Transverse colon (tissue), 4 donors: ENCODE measurements at regions of chr2 and their contacts with region 1.

Region 1: GRCh38 chr2:79097843-79098242 is 10.1 kb upstream of the REG1B start:
- DNase-seq: no peak
- H3K4me3 ChIP-seq: no peak overlapping the region
- H3K27ac ChIP-seq: no peak overlapping the region
- H3K4me1 ChIP-seq: no peaks in the 10 kb centered on the region
- H3K27me3 ChIP-seq: peaks cover 36% of the 10 kb centered on the region
- CTCF ChIP-seq: no peak
- EP300 ChIP-seq: no peak
- POLR2A ChIP-seq: no peak

Region 2: GRCh38 chr2:77161009-77161408 is 1936.8 kb before region 1 on chr2:
- in situ Hi-C with region 1: no loop called
- intact Hi-C with region 1: no loop called
- DNase-seq: no peak
- H3K4me3 ChIP-seq: no peak overlapping the region
- H3K27ac ChIP-seq: no peak overlapping the region
- H3K4me1 ChIP-seq: no peaks in the 10 kb centered on the region
- H3K27me3 ChIP-seq: no peaks in the 10 kb centered on the region
- CTCF ChIP-seq: no peak
- EP300 ChIP-seq: no peak
- POLR2A ChIP-seq: no peak

Region 3: GRCh38 chr2:77937366-77937765 is 1160.5 kb before region 1 on chr2:
- in situ Hi-C with region 1: no loop called
- intact Hi-C with region 1: no loop called
- DNase-seq: no peak
- H3K4me3 ChIP-seq: no peak overlapping the region
- H3K27ac ChIP-seq: no peak overlapping the region
- H3K4me1 ChIP-seq: no peaks in the 10 kb centered on the region
- H3K27me3 ChIP-seq: no peaks in the 10 kb centered on the region
- CTCF ChIP-seq: no peak
- EP300 ChIP-seq: no peak
- POLR2A ChIP-seq: no peak

Region 4: DNA sequence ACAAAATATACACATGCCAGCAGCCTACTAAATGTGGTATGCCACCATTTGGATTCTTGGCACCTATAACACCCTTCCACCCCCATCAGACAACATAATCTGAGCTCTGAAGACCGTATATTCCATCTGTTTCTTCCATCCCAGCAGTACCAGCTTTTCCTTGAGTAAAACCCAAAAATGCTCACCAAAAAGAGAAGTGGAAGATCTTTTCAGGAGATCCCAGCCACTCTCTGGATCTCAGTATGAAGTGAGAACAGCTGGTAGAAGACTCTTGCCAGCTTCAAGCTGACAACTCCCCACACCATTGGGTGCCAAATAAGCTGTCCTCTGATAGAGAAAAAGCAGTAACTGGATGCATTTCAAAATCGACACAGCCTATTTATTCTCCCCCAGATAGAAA is 32.6 kb before region 1 on chr2:
- in situ Hi-C with region 1: no loop called
- intact Hi-C with region 1: no loop called
- DNase-seq: no peak
- H3K4me3 ChIP-seq: no peak overlapping the region
- H3K27ac ChIP-seq: no peak overlapping the region
- H3K4me1 ChIP-seq: no peaks in the 10 kb centered on the region
- H3K27me3 ChIP-seq: no peaks in the 10 kb centered on the region
- CTCF ChIP-seq: no peak
- EP300 ChIP-seq: no peak
- POLR2A ChIP-seq: no peak

Region 5: DNA sequence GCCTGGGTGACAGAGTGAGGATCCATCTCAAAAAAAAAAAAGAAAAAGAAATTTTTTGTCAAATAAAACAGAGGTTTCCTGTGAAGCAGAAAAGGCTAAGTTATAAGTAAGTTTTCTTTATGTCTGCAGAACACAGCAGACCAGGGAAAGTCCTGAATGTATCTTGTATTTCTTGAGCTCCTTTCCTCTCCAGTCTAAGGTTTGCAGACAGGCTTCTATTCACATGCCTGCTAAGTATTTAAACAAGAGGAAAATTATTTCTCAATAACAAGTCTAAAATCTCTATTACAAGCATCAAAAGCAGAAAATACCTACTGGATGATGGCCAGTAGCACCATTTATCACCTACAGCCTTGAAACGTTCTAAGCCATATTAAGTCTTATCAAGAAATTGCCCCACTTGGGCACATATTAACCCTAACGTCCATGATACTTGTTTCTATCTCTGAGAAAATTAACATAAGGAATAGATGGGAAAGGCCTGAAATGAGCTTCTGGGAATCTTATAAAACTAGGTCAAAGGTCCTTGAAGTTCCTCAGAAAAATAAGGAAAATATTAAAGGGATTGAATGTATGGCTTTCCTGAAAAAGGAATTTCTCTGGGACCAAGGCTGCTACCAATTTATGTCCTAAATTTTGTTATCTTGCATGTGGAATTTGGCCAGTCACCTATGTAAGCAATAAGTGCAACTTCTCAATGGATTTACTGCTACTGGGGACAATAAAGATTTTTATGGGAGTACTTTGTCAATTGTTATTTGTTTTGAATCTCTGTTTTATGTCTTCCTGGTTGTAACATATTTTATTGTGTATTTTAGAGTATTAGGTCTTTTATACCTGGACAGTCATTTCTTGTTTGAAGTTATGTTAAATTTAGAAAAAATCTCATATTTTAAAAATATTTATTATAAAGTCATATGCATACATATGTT is 19.4 kb after region 1 on chr2:
- in situ Hi-C with region 1: no loop called
- intact Hi-C with region 1: loop called (anchors 2 kb)
- DNase-seq: no peak
- H3K4me3 ChIP-seq: no peak overlapping the region
- H3K27ac ChIP-seq: no peak overlapping the region
- H3K4me1 ChIP-seq: no peaks in the 10 kb centered on the region
- H3K27me3 ChIP-seq: peaks cover 62% of the 10 kb centered on the region
- CTCF ChIP-seq: no peak
- EP300 ChIP-seq: no peak
- POLR2A ChIP-seq: no peak